ENCODE measurements at regions of chr17 and their contacts with region 1.

Region 1: GRCh38 chr17:68184816-68185436 is 62.9 kb upstream of the AMZ2 start:
- DNase-seq: peak; percentile 73
- H3K4me3 Mint-ChIP-seq: peak overlapping the region; percentile 43
- H3K27ac Mint-ChIP-seq: peak overlapping the region; percentile 80
- H3K4me1 Mint-ChIP-seq: peaks cover 57% of the 10 kb centered on the region
- H3K27me3 Mint-ChIP-seq: no peaks in the 10 kb centered on the region

Region 2: DNA sequence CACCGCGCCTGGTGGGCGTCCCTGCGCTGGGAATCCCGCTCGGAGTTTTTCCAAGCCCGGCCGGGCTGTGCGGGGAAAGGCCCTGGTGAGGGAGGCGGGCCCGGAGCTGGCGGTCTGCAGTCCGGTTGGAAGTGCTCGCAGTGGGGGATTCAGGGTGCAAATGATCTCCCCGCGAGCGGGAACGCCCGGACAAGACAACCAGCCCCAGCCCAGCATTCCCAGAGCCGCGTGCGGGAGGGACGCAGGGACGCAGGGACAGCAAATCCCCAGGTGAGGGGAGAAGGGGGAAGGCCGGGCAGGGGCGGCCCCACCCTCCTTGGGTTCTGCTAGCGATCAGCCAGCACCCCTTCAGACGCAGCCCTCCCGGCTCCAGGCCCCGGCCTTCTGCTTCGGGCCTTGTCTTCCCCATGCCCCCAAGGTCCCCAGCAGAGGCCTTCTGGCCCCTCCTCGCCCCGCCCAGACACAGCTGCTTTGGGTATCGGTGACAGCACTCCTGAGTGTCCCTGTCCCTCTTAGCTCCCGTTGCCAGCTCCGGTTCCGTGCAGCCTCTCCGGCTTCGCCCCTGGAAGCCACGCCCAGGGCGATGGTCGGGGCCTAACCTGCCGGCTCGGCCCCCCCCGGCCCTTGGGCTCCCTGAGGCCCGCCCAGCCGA is 12.1 kb after region 1 on chr17:
- CTCF ChIA-PET with region 1: interaction called, 105 read pairs
- POLR2A ChIA-PET with region 1: interaction called, 153 read pairs
- DNase-seq: no peak
- H3K4me3 Mint-ChIP-seq: peak overlapping the region; percentile 39
- H3K27ac Mint-ChIP-seq: no peak overlapping the region
- H3K4me1 Mint-ChIP-seq: peaks cover 46% of the 10 kb centered on the region
- H3K27me3 Mint-ChIP-seq: peaks cover 44% of the 10 kb centered on the region

Region 3: GRCh38 chr17:68238164-68238872 is 53.4 kb after region 1 on chr17:
- CTCF ChIA-PET with region 1: no interaction called
- POLR2A ChIA-PET with region 1: interaction called, 27 read pairs
- DNase-seq: no peak
- H3K4me3 Mint-ChIP-seq: peak overlapping the region; percentile 70
- H3K27ac Mint-ChIP-seq: peak overlapping the region; percentile 97
- H3K4me1 Mint-ChIP-seq: peaks cover 63% of the 10 kb centered on the region
- H3K27me3 Mint-ChIP-seq: no peaks in the 10 kb centered on the region

Region 4: GRCh38 chr17:68435876-68436842 is 251.2 kb after region 1 on chr17:
- CTCF ChIA-PET with region 1: interaction called, 4 read pairs
- POLR2A ChIA-PET with region 1: interaction called, 16 read pairs
- DNase-seq: peak; percentile 89
- H3K4me3 Mint-ChIP-seq: peak overlapping the region; percentile 60
- H3K27ac Mint-ChIP-seq: peak overlapping the region; percentile 90
- H3K4me1 Mint-ChIP-seq: peaks cover 67% of the 10 kb centered on the region
- H3K27me3 Mint-ChIP-seq: no peaks in the 10 kb centered on the region